T-cell (primary cell): ENCODE measurements at regions of chr3 and their contacts with region 1.

Region 1: DNA sequence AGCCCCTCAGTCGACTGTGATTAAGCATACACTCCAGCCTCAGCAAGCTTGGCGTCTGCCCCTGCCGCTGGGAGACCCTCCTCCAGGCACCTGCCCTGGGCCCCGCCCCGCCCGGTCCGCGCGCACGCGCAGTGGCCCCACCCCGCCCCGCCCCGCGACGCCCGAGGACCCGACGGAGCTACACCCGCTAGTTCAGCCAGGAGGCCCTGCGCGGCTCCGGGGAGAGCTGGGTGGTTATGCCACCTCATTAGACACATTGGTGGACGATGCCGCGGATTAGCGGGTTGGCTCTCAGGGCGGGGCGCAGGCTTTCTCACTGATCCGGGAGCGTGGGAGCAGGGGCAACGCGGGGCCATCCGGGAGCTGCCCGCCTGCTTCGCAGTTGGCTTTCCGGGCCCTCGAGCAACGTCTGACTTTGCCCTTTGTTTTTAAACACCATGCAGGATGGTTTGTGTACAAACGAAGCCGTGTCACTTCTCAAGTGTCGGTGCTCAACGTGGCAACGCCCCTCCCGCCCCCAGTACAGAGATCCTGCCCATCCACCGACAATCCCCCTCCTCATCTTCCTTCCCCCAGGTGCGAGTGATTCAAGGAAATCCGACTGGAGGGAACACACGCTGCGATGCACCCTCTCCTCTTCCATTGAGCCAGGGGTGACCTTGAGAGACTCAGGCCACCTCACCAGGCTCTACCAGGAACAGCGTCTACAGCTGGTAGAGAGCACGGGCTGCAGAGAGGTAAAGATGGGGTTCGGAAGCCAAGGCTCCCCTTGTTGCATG is 109.3 kb downstream of the SHQ1 start:
- DNase-seq: peak; percentile 52 to 83 (median 70)
- ATAC-seq: peak; percentile 92 to 95 (median 92)
- H3K4me3 ChIP-seq: peak overlapping the region; percentile 68 to 71
- H3K4me3 Mint-ChIP-seq: peak overlapping the region; percentile 84 to 88 (median 86)
- H3K27ac ChIP-seq: peak overlapping the region; percentile 68
- H3K27ac Mint-ChIP-seq: peak overlapping the region; percentile 87 to 97
- H3K4me1 ChIP-seq: peaks cover 18 to 23% of the 10 kb centered on the region in 2 experiments
- H3K4me1 Mint-ChIP-seq: peaks cover 27 to 31% (median 30%) of the 10 kb centered on the region in 3 donors
- H3K27me3 ChIP-seq: peaks cover 0 to 7% of the 10 kb centered on the region in 2 experiments
- H3K27me3 Mint-ChIP-seq: peaks cover 0 to 2% of the 10 kb centered on the region in 2 donors

Region 2: GRCh38 chr3:71307991-71308697 is 1430.8 kb before region 1 on chr3:
- CTCF ChIA-PET with region 1: interaction called in 1 of 2 experiments, 14 read pairs
- POLR2A ChIA-PET with region 1: no interaction called
- DNase-seq: no peak
- ATAC-seq: no peak
- H3K4me3 ChIP-seq: peak overlapping the region in 1 of 2 donors; percentile 15
- H3K4me3 Mint-ChIP-seq: peak overlapping the region; percentile 31 to 70 (median 52)
- H3K27ac ChIP-seq: peak overlapping the region; percentile 25
- H3K27ac Mint-ChIP-seq: peak overlapping the region; percentile 82 to 87
- H3K4me1 ChIP-seq: peaks cover 30 to 41% of the 10 kb centered on the region in 2 experiments
- H3K4me1 Mint-ChIP-seq: peaks cover 87 to 90% (median 88%) of the 10 kb centered on the region in 3 donors
- H3K27me3 ChIP-seq: no peaks in the 10 kb centered on the region
- H3K27me3 Mint-ChIP-seq: no peaks in the 10 kb centered on the region

Region 3: DNA sequence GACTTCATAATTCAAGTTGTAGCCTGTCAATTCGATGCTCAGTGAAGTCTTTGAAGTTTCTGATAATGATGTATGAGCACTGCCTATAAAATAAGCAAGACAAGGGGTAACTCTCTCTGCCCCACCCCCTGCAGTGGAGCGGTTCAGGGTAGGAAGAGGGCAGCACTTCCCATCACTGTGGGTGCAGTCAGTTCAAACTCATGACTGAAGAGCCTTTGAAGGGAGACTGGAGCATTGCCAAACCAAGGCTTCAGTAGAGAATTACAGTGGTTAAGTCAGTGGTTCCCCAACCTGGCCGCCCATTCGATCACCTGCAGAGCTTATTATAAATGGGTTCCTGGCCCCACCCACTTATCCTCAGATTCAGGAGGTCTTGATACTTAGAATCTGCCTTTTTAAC is 81.3 kb before region 1 on chr3:
- CTCF ChIA-PET with region 1: interaction called in 1 of 2 experiments, 11 read pairs
- POLR2A ChIA-PET with region 1: no interaction called
- DNase-seq: peak; percentile 16 to 82 (median 56)
- ATAC-seq: peak; percentile 91 to 99 (median 98)
- H3K4me3 ChIP-seq: no peak overlapping the region
- H3K4me3 Mint-ChIP-seq: peak overlapping the region in 1 of 3 donors; percentile 19
- H3K27ac ChIP-seq: no peak overlapping the region
- H3K27ac Mint-ChIP-seq: peak overlapping the region in 1 of 2 donors; percentile 9
- H3K4me1 ChIP-seq: peaks cover 7 to 13% of the 10 kb centered on the region in 2 experiments
- H3K4me1 Mint-ChIP-seq: peaks cover 18 to 28% (median 19%) of the 10 kb centered on the region in 3 donors
- H3K27me3 ChIP-seq: peaks cover 0 to 30% of the 10 kb centered on the region in 2 experiments
- H3K27me3 Mint-ChIP-seq: peaks cover 5 to 9% of the 10 kb centered on the region in 2 donors